WTC11 (cell line): ENCODE measurements at regions of chr1 and their contacts with region 1.

Region 1: DNA sequence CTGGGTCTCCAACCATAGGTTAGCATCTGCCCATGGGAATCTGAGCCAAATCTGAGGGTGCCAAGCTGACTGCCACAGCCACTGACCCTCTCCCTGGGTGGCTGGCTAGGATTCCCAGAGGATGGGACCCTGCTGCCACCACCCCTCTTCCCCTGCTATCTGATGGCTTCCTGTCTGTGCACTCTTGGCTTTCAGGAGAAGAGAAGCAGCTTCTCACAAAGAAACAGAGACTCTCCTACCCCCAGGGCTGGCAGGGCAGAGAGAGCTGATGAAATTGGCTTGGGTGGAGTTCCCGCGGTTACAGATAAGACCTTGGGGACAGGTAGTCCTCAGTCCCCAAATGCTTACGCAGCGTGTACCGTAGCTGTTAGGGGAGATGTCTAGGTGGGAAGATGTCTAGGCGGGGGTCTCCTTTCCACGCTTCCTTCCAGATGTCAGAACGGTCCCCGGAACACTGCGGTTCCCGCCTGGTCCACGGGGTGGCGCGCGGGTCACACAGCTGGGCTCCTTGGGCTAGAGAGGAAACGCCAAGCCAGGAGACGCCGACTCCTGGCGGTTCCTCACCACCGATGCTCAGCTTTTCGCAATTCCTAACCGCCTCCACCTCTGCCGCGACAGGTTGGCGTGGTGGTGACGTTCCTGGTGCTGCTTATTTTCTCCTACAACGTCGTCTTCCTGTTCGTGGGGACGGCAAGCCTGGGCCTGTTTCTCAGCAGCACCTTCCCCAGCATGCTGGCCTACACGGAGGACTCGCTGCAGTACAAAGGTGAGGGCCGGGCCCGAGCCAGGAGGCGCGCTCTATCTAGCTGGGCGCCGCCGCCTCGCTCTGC is 40.1 kb downstream of the ELK4 start:
- DNase-seq: peak; percentile 97
- ATAC-seq: peak; percentile 86
- H3K4me3 Mint-ChIP-seq: peak overlapping the region; percentile 72
- H3K27ac Mint-ChIP-seq: peak overlapping the region; percentile 50; the same call in 1 of the 2 replicates
- H3K4me1 Mint-ChIP-seq: peaks cover 8% of the 10 kb centered on the region
- H3K27me3 Mint-ChIP-seq: peaks cover 10% of the 10 kb centered on the region
- CTCF ChIP-seq: peak; percentile 78

Region 2: GRCh38 chr1:205568469-205569361 is 23.0 kb before region 1 on chr1:
- CTCF ChIA-PET with region 1: interaction called, 20 read pairs
- POLR2A ChIA-PET with region 1: no interaction called
- DNase-seq: no peak
- ATAC-seq: peak; percentile 19
- H3K4me3 Mint-ChIP-seq: peak overlapping the region; percentile 68
- H3K27ac Mint-ChIP-seq: no peak overlapping the region
- H3K4me1 Mint-ChIP-seq: peaks cover 12% of the 10 kb centered on the region
- H3K27me3 Mint-ChIP-seq: peaks cover 77% of the 10 kb centered on the region
- CTCF ChIP-seq: no peak

Region 3: DNA sequence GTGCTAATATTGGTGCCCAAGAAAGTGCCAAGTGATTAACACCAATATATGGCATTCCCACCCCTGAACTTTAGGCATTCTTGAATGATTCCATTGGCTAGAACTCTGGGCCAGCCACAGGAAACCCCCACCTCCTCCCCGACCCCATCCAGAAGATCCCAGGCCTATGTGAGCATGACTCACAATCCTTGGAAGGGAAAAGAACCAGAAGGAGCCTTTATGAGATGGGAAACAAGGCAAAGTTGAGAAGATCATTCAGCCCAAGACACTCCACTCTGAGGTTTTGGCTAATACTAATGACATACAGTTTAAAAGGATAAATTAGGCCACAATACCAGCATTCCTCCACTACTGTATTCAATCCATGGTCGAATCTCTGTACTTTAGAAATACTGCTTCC is 18.3 kb after region 1 on chr1:
- CTCF ChIA-PET with region 1: interaction called, 12 read pairs
- POLR2A ChIA-PET with region 1: interaction called, 7 read pairs
- DNase-seq: no peak
- ATAC-seq: peak; percentile 41; the same call in 1 of the 2 replicates
- H3K4me3 Mint-ChIP-seq: no peak overlapping the region
- H3K27ac Mint-ChIP-seq: peak overlapping the region; percentile 49; the same call in 1 of the 2 replicates
- H3K4me1 Mint-ChIP-seq: no peaks in the 10 kb centered on the region
- H3K27me3 Mint-ChIP-seq: no peaks in the 10 kb centered on the region
- CTCF ChIP-seq: no peak

Region 4: DNA sequence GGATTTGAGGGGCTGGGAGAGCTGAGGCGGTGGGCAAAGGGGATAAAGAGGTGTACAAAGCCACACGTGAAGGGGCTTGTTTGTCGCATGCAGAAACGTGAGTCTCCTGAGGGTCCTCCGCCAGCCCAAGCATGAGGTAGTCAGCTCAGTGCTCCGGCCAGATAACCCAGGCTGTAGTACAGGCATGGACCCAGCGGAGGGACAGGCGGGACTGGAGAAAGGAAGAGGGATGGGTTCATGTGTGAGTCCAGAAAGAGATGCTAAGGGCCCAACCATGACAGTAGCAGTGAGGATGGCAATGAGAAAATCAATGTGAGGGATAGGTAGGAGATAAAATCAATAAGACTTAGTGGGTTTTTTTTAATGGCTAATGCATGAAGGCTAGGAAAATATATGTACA is 53.8 kb after region 1 on chr1:
- CTCF ChIA-PET with region 1: interaction called, 20 read pairs
- POLR2A ChIA-PET with region 1: interaction called, 3 read pairs
- DNase-seq: no peak
- ATAC-seq: peak; percentile 68
- H3K4me3 Mint-ChIP-seq: no peak overlapping the region
- H3K27ac Mint-ChIP-seq: 0 out of 2 replicates have a peak overlapping the region, but pooled peaks have one; percentile 30
- H3K4me1 Mint-ChIP-seq: peaks cover 24% of the 10 kb centered on the region
- H3K27me3 Mint-ChIP-seq: no peaks in the 10 kb centered on the region
- CTCF ChIP-seq: no peak

Region 5: GRCh38 chr1:205711104-205712020 is 119.6 kb after region 1 on chr1:
- CTCF ChIA-PET with region 1: interaction called, 57 read pairs
- POLR2A ChIA-PET with region 1: interaction called, 3 read pairs
- DNase-seq: peak; percentile 65
- ATAC-seq: peak; percentile 87
- H3K4me3 Mint-ChIP-seq: no peak overlapping the region
- H3K27ac Mint-ChIP-seq: peak overlapping the region; percentile 77
- H3K4me1 Mint-ChIP-seq: peaks cover 36% of the 10 kb centered on the region
- H3K27me3 Mint-ChIP-seq: no peaks in the 10 kb centered on the region
- CTCF ChIP-seq: peak; percentile 75